IMR-90 (cell line): ENCODE measurements at regions of chr17 and their contacts with region 1.

Region 1: DNA sequence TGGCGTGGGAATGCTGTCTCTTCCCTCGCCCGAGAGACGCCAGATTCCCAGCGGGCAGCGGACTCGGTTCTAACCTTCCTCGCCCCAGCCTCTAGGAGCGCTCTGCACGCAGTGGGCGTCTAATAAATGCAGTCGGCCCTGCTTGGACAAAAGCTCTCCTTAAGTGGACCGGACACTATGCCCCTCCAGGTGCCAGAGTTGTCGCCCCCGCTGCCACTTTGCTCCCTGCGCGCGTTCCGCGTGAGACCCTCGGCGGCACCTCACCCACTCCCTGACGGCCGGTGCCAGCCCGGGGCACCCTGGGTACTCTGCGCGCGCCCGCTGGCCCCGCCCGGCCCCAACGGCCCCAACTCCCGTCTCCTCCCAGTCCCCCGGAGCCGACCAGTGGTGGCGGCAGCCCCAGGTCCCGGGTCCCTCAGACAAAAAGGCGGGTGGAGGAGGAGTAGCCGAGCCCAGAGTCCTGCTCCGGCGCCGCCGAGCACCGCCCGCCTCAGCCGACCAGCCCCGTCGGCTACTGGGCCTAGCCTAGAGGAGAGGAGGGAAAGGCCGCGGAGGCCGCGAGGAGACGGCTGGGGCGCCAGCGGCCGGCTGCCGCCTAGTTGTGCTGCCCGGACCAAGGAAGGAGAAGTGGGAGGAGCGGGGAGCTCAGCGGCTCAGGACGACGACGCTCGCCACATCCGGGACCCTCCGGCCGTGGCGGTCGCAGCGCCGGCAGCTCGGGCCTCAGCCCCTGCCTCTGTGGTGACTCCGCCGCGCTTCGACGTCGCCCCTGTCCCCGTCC is 123.0 kb downstream of the GOSR1 start:
- DNase-seq: peak; percentile 70
- ATAC-seq: peak; percentile 93
- H3K4me3 ChIP-seq: peak overlapping the region; percentile 75
- H3K27ac ChIP-seq: peak overlapping the region; percentile 92
- H3K4me1 ChIP-seq: peaks cover 2% of the 10 kb centered on the region
- H3K27me3 ChIP-seq: no peaks in the 10 kb centered on the region
- CTCF ChIP-seq: peak; percentile 50
- POLR2A ChIP-seq: peak; percentile 75
- RAD21 ChIP-seq: peak; percentile 25; the same call in 1 of the 2 replicates

Region 2: GRCh38 chr17:30084788-30085187 is 515.5 kb before region 1 on chr17:
- CTCF ChIA-PET with region 1: no interaction called
- POLR2A ChIA-PET with region 1: no interaction called
- dilution Hi-C with region 1: no loop called
- in situ Hi-C with region 1: no loop called
- intact Hi-C with region 1: no loop called
- DNase-seq: no peak
- ATAC-seq: no peak
- H3K4me3 ChIP-seq: no peak overlapping the region
- H3K27ac ChIP-seq: no peak overlapping the region
- H3K4me1 ChIP-seq: no peaks in the 10 kb centered on the region
- H3K27me3 ChIP-seq: peaks cover 32% of the 10 kb centered on the region
- CTCF ChIP-seq: no peak
- POLR2A ChIP-seq: no peak
- RAD21 ChIP-seq: no peak

Region 3: GRCh38 chr17:30318155-30318554 is 282.1 kb before region 1 on chr17:
- CTCF ChIA-PET with region 1: no interaction called
- POLR2A ChIA-PET with region 1: no interaction called
- dilution Hi-C with region 1: no loop called
- in situ Hi-C with region 1: no loop called
- intact Hi-C with region 1: no loop called
- DNase-seq: no peak
- ATAC-seq: no peak
- H3K4me3 ChIP-seq: no peak overlapping the region
- H3K27ac ChIP-seq: no peak overlapping the region
- H3K4me1 ChIP-seq: peaks cover 2% of the 10 kb centered on the region; the same call in 1 of the 2 replicates
- H3K27me3 ChIP-seq: peaks cover 7% of the 10 kb centered on the region
- CTCF ChIP-seq: no peak
- POLR2A ChIP-seq: no peak
- RAD21 ChIP-seq: no peak

Region 4: GRCh38 chr17:30519707-30520106 is 80.5 kb before region 1 on chr17:
- CTCF ChIA-PET with region 1: no interaction called
- POLR2A ChIA-PET with region 1: interaction called, 3 read pairs
- dilution Hi-C with region 1: no loop called
- in situ Hi-C with region 1: no loop called
- intact Hi-C with region 1: loop called (anchors 5 kb)
- DNase-seq: peak; percentile 91
- ATAC-seq: peak; percentile 65
- H3K4me3 ChIP-seq: no peak overlapping the region
- H3K27ac ChIP-seq: no peak overlapping the region
- H3K4me1 ChIP-seq: peaks cover 10% of the 10 kb centered on the region
- H3K27me3 ChIP-seq: no peaks in the 10 kb centered on the region
- CTCF ChIP-seq: no peak
- POLR2A ChIP-seq: no peak
- RAD21 ChIP-seq: peak; percentile 9; the same call in 1 of the 2 replicates

Region 5: GRCh38 chr17:30696234-30696633 is 96.0 kb after region 1 on chr17:
- CTCF ChIA-PET with region 1: no interaction called
- POLR2A ChIA-PET with region 1: no interaction called
- dilution Hi-C with region 1: no loop called
- in situ Hi-C with region 1: no loop called
- intact Hi-C with region 1: loop called (anchors 10 kb)
- DNase-seq: no peak
- ATAC-seq: no peak
- H3K4me3 ChIP-seq: no peak overlapping the region
- H3K27ac ChIP-seq: no peak overlapping the region
- H3K4me1 ChIP-seq: peaks cover 6% of the 10 kb centered on the region; the same call in 1 of the 2 replicates
- H3K27me3 ChIP-seq: peaks cover 11% of the 10 kb centered on the region
- CTCF ChIP-seq: no peak
- POLR2A ChIP-seq: no peak
- RAD21 ChIP-seq: no peak

Region 6: DNA sequence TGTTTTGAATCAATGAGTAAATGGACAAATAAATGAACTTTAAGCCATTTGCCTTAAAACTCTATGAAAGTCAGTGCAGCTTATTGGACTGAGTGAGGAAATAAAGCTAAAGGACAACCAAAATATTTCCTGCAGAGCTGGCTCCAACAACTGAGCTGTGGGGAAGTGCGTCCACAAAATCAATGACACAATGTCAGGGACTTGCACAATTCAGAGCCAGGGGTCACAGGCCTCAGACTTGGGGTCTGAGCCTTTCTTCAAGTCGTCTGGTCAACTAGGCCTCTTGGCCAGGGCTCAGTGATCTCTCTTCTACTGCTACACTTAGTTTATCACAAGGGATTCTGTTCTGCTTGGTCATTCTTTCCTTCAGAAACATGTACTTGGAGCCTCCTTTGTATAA is 1639.2 kb after region 1 on chr17:
- CTCF ChIA-PET with region 1: no interaction called
- POLR2A ChIA-PET with region 1: no interaction called
- dilution Hi-C with region 1: no loop called
- in situ Hi-C with region 1: no loop called
- intact Hi-C with region 1: no loop called
- DNase-seq: no peak
- ATAC-seq: no peak
- H3K4me3 ChIP-seq: no peak overlapping the region
- H3K27ac ChIP-seq: no peak overlapping the region
- H3K4me1 ChIP-seq: no peaks in the 10 kb centered on the region
- H3K27me3 ChIP-seq: no peaks in the 10 kb centered on the region
- CTCF ChIP-seq: no peak
- POLR2A ChIP-seq: no peak
- RAD21 ChIP-seq: no peak